ENCODE measurements at regions of chr2 and their contacts with region 1.

Region 1: DNA sequence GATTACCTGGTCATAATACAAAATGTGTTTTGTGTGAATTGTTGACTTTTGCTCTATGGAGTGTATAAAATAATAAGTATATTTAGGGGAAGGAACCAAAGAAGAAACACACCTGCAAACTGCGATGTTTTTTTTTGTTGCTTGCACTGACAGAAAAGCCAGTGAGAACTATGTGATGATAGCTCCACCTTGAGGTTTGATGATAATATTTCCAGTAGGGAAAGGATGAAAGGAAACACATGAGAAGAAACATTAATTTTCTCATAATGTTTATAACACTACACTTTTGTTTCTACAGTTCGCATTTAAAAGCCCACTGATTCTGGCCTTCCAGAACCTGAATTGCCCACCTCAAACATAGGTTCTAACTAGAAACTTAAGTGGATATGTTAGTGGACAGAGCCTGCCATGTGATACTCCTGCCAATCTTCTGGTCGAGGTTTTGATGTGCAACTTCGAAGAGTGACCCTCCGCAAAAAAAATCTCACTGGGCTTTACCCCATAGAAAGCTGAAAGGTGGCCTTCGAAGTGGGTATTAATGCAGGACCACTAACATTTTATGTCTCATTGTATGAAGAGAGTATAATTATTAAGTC is 476.4 kb upstream of the SPHKAP start:
- DNase-seq: no peak
- H3K4me3 ChIP-seq: no peak overlapping the region
- H3K27ac ChIP-seq: no peak overlapping the region
- H3K27me3 ChIP-seq: no peaks in the 10 kb centered on the region
- CTCF ChIP-seq: peak; percentile 48 to 86 (median 72)

Region 2: GRCh38 chr2:227890495-227891079 is 767.3 kb before region 1 on chr2:
- intact Hi-C with region 1: loop called (anchors 2 to 5 kb)
- DNase-seq: no peak
- H3K4me3 ChIP-seq: no peak overlapping the region
- H3K27ac ChIP-seq: no peak overlapping the region
- H3K27me3 ChIP-seq: no peaks in the 10 kb centered on the region
- CTCF ChIP-seq: peak; percentile 63 to 93 (median 82)

Region 3: GRCh38 chr2:227939271-227940027 is 718.5 kb before region 1 on chr2:
- intact Hi-C with region 1: loop called in 1 of 2 experiments (anchors 5 kb)
- DNase-seq: peak in 8 of 10 donors; percentile 16 to 50 (median 40)
- H3K4me3 ChIP-seq: peak overlapping the region in 7 of 59 donors; percentile 8 to 28 (median 16)
- H3K27ac ChIP-seq: peak overlapping the region in 52 of 59 donors; percentile 2 to 84 (median 58)
- H3K27me3 ChIP-seq: peaks cover 0 to 4% (median 0%) of the 10 kb centered on the region in 45 donors
- CTCF ChIP-seq: peak in 55 of 56 donors; percentile 21 to 84 (median 66)

Region 4: DNA sequence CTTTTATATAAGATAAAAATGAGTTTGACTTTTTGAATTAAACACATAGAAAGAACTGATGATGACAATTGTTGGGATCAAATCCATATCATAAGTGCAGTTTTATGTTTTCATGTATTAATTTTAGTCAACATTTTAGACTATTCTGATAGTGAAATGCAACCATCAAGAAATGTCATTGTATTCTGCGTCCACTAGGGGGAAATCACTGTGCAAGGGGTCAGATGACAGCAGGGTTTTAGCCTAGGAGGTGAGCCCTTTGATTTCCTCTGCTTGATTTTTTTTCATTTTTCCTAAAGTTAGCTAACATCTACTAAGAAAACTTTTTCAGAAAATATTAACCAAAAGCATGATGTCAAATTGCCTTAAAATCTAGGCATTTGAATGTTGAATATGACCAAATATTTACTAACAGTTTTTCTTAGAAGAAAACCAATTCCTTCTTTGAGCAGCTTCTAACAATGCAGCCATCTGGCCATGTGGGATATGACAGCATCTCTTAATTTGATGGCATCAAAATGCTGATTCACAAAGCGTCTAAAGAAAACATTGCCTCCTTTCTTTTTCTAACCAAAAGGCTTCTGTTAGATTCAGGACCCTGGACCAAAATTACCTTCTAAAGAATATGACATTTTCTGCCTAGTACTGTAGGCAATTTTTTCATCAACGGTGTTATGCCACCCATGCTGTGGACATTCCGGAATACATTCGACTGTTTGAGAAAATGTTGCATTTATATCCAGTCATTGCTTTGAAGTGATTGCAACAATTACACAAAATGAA is 618.0 kb before region 1 on chr2:
- intact Hi-C with region 1: loop called (anchors 5 to 10 kb)
- DNase-seq: no peak
- H3K4me3 ChIP-seq: no peak overlapping the region
- H3K27ac ChIP-seq: no peak overlapping the region
- H3K27me3 ChIP-seq: no peaks in the 10 kb centered on the region
- CTCF ChIP-seq: peak; percentile 21 to 76 (median 60)

Region 5: DNA sequence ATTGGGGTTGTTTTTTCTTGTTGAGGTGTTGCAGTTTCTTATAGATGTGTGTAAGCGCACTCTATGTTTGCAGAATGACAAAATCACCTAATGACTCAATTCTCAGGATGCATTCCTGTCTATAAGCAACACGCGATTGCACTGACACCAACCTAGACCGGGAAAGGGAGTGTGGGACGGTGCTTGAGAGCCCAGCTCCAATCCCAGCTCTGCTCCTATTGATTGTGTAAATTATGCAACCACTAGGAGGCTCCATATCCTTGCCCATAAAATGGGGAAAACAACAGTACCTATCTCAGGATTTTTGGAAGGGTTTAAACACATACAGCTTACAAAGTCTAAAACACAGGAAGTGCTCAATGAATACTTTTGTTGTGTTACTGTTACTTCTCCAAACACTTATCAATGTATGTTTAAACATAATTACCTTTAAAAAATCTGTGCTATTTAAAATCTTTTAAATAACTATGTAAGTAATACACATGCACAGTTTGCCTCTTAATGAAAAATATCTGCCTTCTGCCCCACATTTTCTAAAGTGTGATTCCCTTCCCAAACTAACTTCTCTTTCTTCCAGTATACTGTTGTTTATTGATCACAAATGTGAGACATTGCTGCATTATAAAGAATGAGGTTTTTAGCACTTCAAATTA is 608.9 kb before region 1 on chr2:
- intact Hi-C with region 1: loop called (anchors 5 to 10 kb)
- DNase-seq: peak in 1 of 10 donors; percentile 16
- H3K4me3 ChIP-seq: no peak overlapping the region
- H3K27ac ChIP-seq: no peak overlapping the region
- H3K27me3 ChIP-seq: no peaks in the 10 kb centered on the region
- CTCF ChIP-seq: peak; percentile 43 to 77 (median 62)

Measured in dorsolateral prefrontal cortex (tissue), 120 donors.